Activated naive CD4-positive, alpha-beta T cell treated with anti-CD3 and anti-CD28 coated beads for 36 hours (primary cell): ENCODE measurements at regions of chr4 and their contacts with region 1.

Region 1: GRCh38 chr4:102612824-102613366 is 111.7 kb downstream of the NFKB1 start:
- DNase-seq: peak; percentile 75
- H3K4me3 Mint-ChIP-seq: peak overlapping the region; percentile 48
- H3K27ac Mint-ChIP-seq: peak overlapping the region; percentile 89
- H3K4me1 Mint-ChIP-seq: peaks cover 78% of the 10 kb centered on the region
- H3K27me3 Mint-ChIP-seq: no peaks in the 10 kb centered on the region

Region 2: GRCh38 chr4:102525097-102525496 is 87.8 kb before region 1 on chr4:
- CTCF ChIA-PET with region 1: no interaction called
- intact Hi-C with region 1: loop called (anchors 2 kb)
- DNase-seq: peak; percentile 22
- H3K4me3 Mint-ChIP-seq: peak overlapping the region; percentile 47
- H3K27ac Mint-ChIP-seq: peak overlapping the region; percentile 83
- H3K4me1 Mint-ChIP-seq: peaks cover 88% of the 10 kb centered on the region
- H3K27me3 Mint-ChIP-seq: no peaks in the 10 kb centered on the region

Region 3: GRCh38 chr4:102564399-102565059 is 48.4 kb before region 1 on chr4:
- CTCF ChIA-PET with region 1: interaction called, 3 read pairs
- intact Hi-C with region 1: loop called (anchors 1 kb)
- DNase-seq: peak; percentile 66
- H3K4me3 Mint-ChIP-seq: no peak overlapping the region
- H3K27ac Mint-ChIP-seq: peak overlapping the region; percentile 75
- H3K4me1 Mint-ChIP-seq: peaks cover 78% of the 10 kb centered on the region
- H3K27me3 Mint-ChIP-seq: no peaks in the 10 kb centered on the region

Region 4: GRCh38 chr4:102578819-102579218 is 34.1 kb before region 1 on chr4:
- CTCF ChIA-PET with region 1: interaction called, 6 read pairs
- intact Hi-C with region 1: loop called (anchors 1 kb)
- DNase-seq: peak; percentile 24
- H3K4me3 Mint-ChIP-seq: no peak overlapping the region
- H3K27ac Mint-ChIP-seq: no peak overlapping the region
- H3K4me1 Mint-ChIP-seq: peaks cover 65% of the 10 kb centered on the region
- H3K27me3 Mint-ChIP-seq: no peaks in the 10 kb centered on the region

Region 5: GRCh38 chr4:102585329-102585728 is 27.6 kb before region 1 on chr4:
- CTCF ChIA-PET with region 1: interaction called, 4 read pairs
- intact Hi-C with region 1: loop called (anchors 1 kb)
- DNase-seq: peak; percentile 60
- H3K4me3 Mint-ChIP-seq: no peak overlapping the region
- H3K27ac Mint-ChIP-seq: peak overlapping the region; percentile 78
- H3K4me1 Mint-ChIP-seq: peaks cover 72% of the 10 kb centered on the region
- H3K27me3 Mint-ChIP-seq: no peaks in the 10 kb centered on the region

Region 6: GRCh38 chr4:102598086-102598761 is 14.7 kb before region 1 on chr4:
- CTCF ChIA-PET with region 1: interaction called, 3 read pairs
- intact Hi-C with region 1: loop called (anchors 1 kb)
- DNase-seq: peak; percentile 36
- H3K4me3 Mint-ChIP-seq: peak overlapping the region; percentile 25
- H3K27ac Mint-ChIP-seq: peak overlapping the region; percentile 88
- H3K4me1 Mint-ChIP-seq: peaks cover 67% of the 10 kb centered on the region
- H3K27me3 Mint-ChIP-seq: no peaks in the 10 kb centered on the region

Region 7: GRCh38 chr4:102627831-102628523 is 15.1 kb after region 1 on chr4:
- CTCF ChIA-PET with region 1: interaction called, 10 read pairs
- intact Hi-C with region 1: loop called (anchors 1 kb)
- DNase-seq: peak; percentile 62
- H3K4me3 Mint-ChIP-seq: peak overlapping the region; percentile 22
- H3K27ac Mint-ChIP-seq: peak overlapping the region; percentile 54
- H3K4me1 Mint-ChIP-seq: peaks cover 75% of the 10 kb centered on the region
- H3K27me3 Mint-ChIP-seq: no peaks in the 10 kb centered on the region

Region 8: DNA sequence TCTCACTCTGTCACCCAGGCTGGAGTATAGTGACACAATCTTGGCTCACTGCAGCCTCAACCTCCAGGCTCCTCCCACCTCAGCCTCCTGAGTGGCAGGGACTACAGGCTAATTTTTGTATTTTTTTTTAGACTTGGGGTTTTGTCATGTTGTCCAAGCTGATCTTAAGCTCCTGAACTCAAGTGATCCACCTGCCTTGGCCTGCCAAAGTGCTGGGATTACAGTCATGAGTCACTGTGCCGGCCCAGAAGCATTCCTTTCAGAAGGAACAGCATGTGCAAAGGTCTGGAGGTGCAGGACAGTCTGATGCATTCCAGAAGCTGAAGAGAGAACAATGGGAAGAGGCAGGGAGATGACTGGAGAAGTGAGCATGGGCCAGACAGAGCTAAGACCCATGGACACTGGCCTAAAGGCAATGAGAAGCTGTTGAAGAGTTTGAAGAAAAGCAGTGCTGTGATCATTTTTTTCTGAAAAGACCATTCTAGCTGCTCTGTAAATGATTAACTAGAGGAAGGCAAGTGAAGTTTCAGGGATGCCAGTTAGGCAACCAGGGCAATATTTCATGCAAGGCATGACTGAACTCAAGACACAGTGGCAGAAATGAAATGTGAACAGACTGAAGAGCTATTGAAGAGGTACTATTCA is 104.7 kb after region 1 on chr4:
- CTCF ChIA-PET with region 1: no interaction called
- intact Hi-C with region 1: no loop called
- DNase-seq: no peak
- H3K4me3 Mint-ChIP-seq: no peak overlapping the region
- H3K27ac Mint-ChIP-seq: no peak overlapping the region
- H3K4me1 Mint-ChIP-seq: no peaks in the 10 kb centered on the region
- H3K27me3 Mint-ChIP-seq: no peaks in the 10 kb centered on the region